ENCODE measurements at regions of chr4 and their contacts with region 1.

Region 1: GRCh38 chr4:131348263-131348662 is 1800.8 kb upstream of the PCDH10 start:
- DNase-seq: no peak

Region 2: GRCh38 chr4:131302108-131302507 is 46.2 kb before region 1 on chr4:
- intact Hi-C with region 1: loop called in 1 of 2 experiments (anchors 2 kb)
- DNase-seq: no peak